OCI-LY7 (cell line): ENCODE measurements at regions of chr15 and their contacts with region 1.

Region 1: DNA sequence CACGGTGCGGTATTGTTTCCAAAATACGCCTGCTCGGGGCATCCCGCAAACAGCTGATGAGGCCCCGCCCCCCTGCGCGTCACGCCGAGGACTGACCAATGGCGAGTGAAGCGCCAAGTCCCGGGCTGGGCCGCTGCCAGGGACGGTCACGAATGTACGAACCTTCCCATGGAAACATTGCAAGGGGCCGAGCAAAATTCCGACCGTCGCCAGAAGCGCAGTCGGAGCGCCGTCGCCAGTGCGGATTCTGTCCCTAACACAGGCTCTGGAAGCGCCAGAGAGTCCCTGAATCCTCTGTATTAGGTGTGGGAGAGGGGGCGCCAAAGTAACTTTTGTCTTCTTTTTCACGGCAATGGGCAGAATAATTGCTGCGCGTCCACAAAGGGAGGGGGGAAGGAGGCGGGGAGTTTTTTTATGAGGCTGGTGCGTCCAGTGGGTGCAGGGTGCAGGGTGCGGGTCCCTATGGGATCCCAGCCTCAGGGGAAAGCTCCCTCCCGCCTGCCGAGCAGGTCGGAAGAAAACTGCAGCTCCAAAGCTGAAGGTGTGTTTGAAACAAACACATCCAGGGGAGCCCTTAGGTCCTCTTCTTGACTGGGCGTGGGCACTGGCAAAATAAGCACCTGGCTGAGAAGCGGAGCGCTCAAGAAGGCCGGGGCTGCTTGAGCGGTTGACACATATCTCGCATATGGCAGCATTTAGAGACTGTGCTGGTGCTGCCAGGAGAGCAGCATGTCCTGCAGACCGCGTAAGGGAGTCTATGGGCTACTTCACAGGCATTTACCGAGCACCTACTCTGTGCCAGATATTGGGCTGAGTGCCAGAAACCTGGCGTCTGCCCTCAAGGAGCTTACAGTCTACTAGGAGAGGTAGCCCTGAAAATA is at the start of gene BMF:
- DNase-seq: peak; percentile 98
- H3K4me3 ChIP-seq: peak within 1 kb of the TSS; percentile 77
- H3K27ac ChIP-seq: peak within 1 kb of the TSS; percentile 68
- H3K4me1 ChIP-seq: peaks cover 72% of the 10 kb centered on the region
- CTCF ChIP-seq: peak; percentile 68
- total RNA-seq, gene BMF: 4.8 and 5.3 TPM in 2 replicates

Region 2: DNA sequence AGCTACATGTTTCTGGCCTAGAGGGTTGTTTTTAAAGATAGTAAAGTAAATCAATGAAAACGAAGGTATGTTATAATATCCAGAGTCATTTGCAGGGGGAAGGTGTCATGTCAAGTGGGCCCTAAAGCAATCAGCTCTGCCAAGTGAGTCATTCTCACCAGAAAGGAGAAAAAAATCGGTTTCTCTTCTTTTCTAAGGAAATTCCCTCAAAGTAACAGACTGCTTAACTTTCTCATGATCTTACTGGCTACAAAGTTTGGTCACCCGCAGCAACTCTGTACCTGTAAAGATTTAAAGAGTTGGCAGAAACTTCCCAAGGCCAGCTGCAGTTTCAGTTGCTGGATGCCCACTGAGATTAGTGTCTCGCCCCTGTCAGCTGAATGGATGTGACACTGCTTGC is 321.0 kb before region 1 on chr15:
- CTCF ChIA-PET with region 1: no interaction called
- POLR2A ChIA-PET with region 1: no interaction called
- intact Hi-C with region 1: loop called (anchors 2 kb)
- DNase-seq: no peak
- H3K4me3 ChIP-seq: no peak overlapping the region
- H3K27ac ChIP-seq: no peak overlapping the region
- H3K4me1 ChIP-seq: peaks cover 14% of the 10 kb centered on the region
- CTCF ChIP-seq: no peak

Region 3: GRCh38 chr15:40044717-40045571 is 64.2 kb before region 1 on chr15:
- CTCF ChIA-PET with region 1: interaction called, 81 read pairs
- POLR2A ChIA-PET with region 1: interaction called, 33 read pairs
- intact Hi-C with region 1: loop called (anchors 1 kb)
- DNase-seq: peak; percentile 87
- H3K4me3 ChIP-seq: no peak overlapping the region
- H3K27ac ChIP-seq: peak overlapping the region; percentile 15
- H3K4me1 ChIP-seq: peaks cover 68% of the 10 kb centered on the region
- CTCF ChIP-seq: peak; percentile 97

Region 4: GRCh38 chr15:40092256-40092978 is 16.7 kb before region 1 on chr15:
- CTCF ChIA-PET with region 1: interaction called, 24 read pairs
- POLR2A ChIA-PET with region 1: interaction called, 146 read pairs
- intact Hi-C with region 1: no loop called
- DNase-seq: no peak
- H3K4me3 ChIP-seq: no peak overlapping the region
- H3K27ac ChIP-seq: peak overlapping the region; percentile 40
- H3K4me1 ChIP-seq: peaks cover 70% of the 10 kb centered on the region
- CTCF ChIP-seq: no peak

Region 5: DNA sequence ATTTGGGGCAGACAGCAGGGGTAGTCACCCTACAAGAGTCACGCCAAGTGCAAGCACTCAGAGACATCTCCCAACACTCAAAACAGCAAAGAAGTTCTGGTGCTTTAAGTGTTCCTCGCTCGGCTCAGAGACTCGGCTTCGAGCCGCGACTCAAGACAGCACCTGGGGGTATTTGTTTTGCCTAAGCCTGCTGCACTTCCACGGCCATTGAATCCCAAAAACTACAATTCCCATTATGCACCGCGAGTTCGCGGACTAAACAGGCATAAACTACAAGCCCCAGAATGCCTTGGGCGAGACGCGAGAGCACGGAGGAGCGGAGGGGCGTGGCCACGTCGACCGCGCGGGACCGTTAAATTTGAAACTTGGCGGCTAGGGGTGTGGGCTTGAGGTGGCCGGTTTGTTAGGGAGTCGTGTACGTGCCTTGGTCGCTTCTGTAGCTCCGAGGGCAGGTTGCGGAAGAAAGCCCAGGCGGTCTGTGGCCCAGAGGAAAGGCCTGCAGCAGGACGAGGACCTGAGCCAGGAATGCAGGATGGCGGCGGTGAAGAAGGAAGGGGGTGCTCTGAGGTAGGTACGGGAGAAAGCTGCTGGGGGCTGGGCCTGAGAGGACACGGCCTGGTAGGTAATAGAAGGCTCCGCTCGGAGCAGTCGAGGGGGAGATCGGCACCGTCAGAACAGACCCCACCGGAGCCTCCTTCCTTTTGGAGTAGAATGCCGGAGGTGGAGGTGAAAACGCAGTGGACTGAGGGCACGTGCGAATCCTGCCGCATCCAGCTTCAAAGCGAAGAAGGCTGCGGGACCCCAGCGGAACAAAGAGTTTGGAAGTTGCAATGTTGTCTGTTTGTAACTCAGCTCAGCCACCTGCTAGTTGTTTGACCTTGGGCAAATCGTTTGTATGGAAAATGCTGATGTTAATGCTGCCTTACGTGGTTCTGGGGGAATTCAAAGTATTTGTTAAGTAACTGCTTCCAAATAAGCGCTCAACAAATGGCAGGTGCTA is 51.9 kb after region 1 on chr15 and contains the start of gene BUB1B:
- CTCF ChIA-PET with region 1: interaction called, 9 read pairs
- POLR2A ChIA-PET with region 1: interaction called, 31 read pairs
- intact Hi-C with region 1: loop called (anchors 2 kb)
- DNase-seq: peak; percentile 97
- H3K4me3 ChIP-seq: peak within 1 kb of the TSS; percentile 91
- H3K27ac ChIP-seq: peak within 1 kb of the TSS; percentile 68
- H3K4me1 ChIP-seq: peaks cover 28% of the 10 kb centered on the region
- CTCF ChIP-seq: no peak
- total RNA-seq, gene BUB1B: 192 and 215 TPM in 2 replicates